Aorta (tissue), 5 donors: ENCODE measurements at regions of chr7 and their contacts with region 1.

Region 1: DNA sequence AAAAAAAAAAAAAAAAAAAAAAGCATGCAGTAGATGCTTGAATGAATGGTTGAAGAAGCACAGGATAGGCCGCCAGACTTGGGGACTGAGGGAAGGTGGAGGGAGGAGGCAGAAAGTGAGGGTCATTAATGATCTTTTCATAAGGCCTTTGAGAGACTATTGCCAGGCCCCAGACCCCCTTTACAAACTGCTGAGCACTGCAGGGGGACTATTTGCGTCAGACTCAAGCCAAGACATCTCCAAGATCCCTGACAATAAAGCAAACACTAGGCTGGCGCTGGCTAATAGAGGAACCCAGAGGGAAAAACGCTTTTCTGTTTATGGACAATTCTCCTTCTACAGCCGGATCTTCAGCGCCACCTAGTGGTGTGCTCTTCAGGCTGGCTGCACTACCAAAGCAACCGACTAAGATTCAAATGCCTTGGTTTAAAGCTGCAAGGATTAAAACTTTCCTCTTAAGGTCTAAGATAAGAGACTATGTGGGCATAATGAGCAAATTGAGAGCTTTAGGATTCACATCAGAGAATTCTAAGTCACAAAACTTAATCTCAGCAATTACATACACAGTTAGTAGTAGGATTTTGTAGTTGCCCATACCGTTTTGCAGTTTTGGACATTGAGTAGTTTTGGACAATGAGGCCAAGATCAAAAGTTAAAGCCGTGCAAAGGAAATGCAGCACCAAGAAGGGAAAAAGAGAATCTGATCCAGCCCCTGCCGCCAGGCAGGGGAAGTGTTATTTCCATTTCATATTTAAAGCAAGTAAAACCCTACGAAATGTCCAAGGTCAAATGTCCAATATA is 17.9 kb upstream of the AGK start:
- DNase-seq: peak in 1 of 2 donors; percentile 68
- ATAC-seq: peak; percentile 76
- H3K4me3 ChIP-seq: no peak overlapping the region
- H3K27ac ChIP-seq: no peak overlapping the region
- H3K4me1 ChIP-seq: no peaks in the 10 kb centered on the region
- H3K27me3 ChIP-seq: no peaks in the 10 kb centered on the region

Region 2: GRCh38 chr7:140810830-140811556 is 722.4 kb before region 1 on chr7:
- intact Hi-C with region 1: loop called in 1 of 2 experiments (anchors 5 kb)
- DNase-seq: peak in 1 of 2 donors; percentile 53
- ATAC-seq: peak; percentile 85
- H3K4me3 ChIP-seq: no peak overlapping the region
- H3K27ac ChIP-seq: no peak overlapping the region
- H3K4me1 ChIP-seq: no peaks in the 10 kb centered on the region
- H3K27me3 ChIP-seq: no peaks in the 10 kb centered on the region

Region 3: DNA sequence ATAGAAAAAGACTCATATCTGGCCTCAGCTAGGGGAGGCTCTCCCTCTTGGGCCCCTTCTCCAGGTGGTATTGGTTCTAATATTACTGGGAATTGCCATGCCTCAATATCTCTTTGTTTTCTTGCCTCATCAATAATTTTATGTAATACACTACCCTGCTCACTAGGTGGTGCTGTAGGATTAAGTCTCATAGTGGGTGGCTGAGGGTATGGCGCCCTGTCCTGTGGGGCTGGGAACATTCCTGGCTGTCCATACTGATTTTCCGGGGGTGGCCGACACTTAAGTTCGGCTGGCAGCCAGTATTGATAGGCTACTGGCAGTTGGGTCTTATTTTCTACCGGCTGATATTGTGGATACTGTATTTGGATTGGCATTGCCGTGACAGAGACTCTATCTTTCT is 221.6 kb after region 1 on chr7:
- intact Hi-C with region 1: no loop called
- DNase-seq: no peak
- ATAC-seq: no peak
- H3K4me3 ChIP-seq: no peak overlapping the region
- H3K27ac ChIP-seq: no peak overlapping the region
- H3K4me1 ChIP-seq: no peaks in the 10 kb centered on the region
- H3K27me3 ChIP-seq: no peaks in the 10 kb centered on the region